Natural killer cell (primary cell): ENCODE measurements at regions of chr16 and their contacts with region 1.

Region 1: GRCh38 chr16:21708533-21709115 is 44.9 kb downstream of the OTOA start:
- DNase-seq: peak; percentile 67 to 89
- ATAC-seq: peak; percentile 73 to 79 (median 77)
- H3K4me3 ChIP-seq: no peak overlapping the region
- H3K4me3 Mint-ChIP-seq: no peak overlapping the region
- H3K27ac ChIP-seq: no peak overlapping the region
- H3K27ac Mint-ChIP-seq: no peak overlapping the region
- H3K4me1 ChIP-seq: no peaks in the 10 kb centered on the region
- H3K4me1 Mint-ChIP-seq: peaks cover 0 to 7% of the 10 kb centered on the region in 2 donors
- H3K27me3 ChIP-seq: no peaks in the 10 kb centered on the region
- H3K27me3 Mint-ChIP-seq: no peaks in the 10 kb centered on the region
- CTCF ChIP-seq: peak; percentile 87

Region 2: GRCh38 chr16:21584817-21585216 is 123.8 kb before region 1 on chr16:
- intact Hi-C with region 1: loop called (anchors 1 kb)
- DNase-seq: no peak
- ATAC-seq: no peak
- H3K4me3 ChIP-seq: no peak overlapping the region
- H3K4me3 Mint-ChIP-seq: no peak overlapping the region
- H3K27ac ChIP-seq: no peak overlapping the region
- H3K27ac Mint-ChIP-seq: no peak overlapping the region
- H3K4me1 ChIP-seq: peaks cover 7% of the 10 kb centered on the region
- H3K4me1 Mint-ChIP-seq: peaks cover 0 to 4% of the 10 kb centered on the region in 2 donors
- H3K27me3 ChIP-seq: no peaks in the 10 kb centered on the region
- H3K27me3 Mint-ChIP-seq: peaks cover 0 to 11% of the 10 kb centered on the region in 2 donors
- CTCF ChIP-seq: no peak

Region 3: GRCh38 chr16:21656795-21657768 is 51.5 kb before region 1 on chr16:
- intact Hi-C with region 1: loop called (anchors 1 kb)
- DNase-seq: peak in 1 of 2 donors; percentile 86
- ATAC-seq: peak; percentile 53 to 64 (median 59)
- H3K4me3 ChIP-seq: no peak overlapping the region
- H3K4me3 Mint-ChIP-seq: peak overlapping the region; percentile 64
- H3K27ac ChIP-seq: no peak overlapping the region
- H3K27ac Mint-ChIP-seq: peak overlapping the region; percentile 32 to 70
- H3K4me1 ChIP-seq: peaks cover 19% of the 10 kb centered on the region
- H3K4me1 Mint-ChIP-seq: peaks cover 29 to 34% of the 10 kb centered on the region in 2 donors
- H3K27me3 ChIP-seq: no peaks in the 10 kb centered on the region
- H3K27me3 Mint-ChIP-seq: no peaks in the 10 kb centered on the region
- CTCF ChIP-seq: peak; percentile 87